Activated CD4-positive, alpha-beta memory T cell treated with anti-CD3 and anti-CD28 coated beads for 36 hours (primary cell): ENCODE measurements at regions of chr10 and their contacts with region 1.

Region 1: GRCh38 chr10:110547139-110547761 is 20.2 kb upstream of the SMC3 start:
- DNase-seq: no peak
- H3K4me3 Mint-ChIP-seq: no peak overlapping the region
- H3K27ac Mint-ChIP-seq: no peak overlapping the region
- H3K4me1 Mint-ChIP-seq: peaks cover 10% of the 10 kb centered on the region
- H3K27me3 Mint-ChIP-seq: peaks cover 12% of the 10 kb centered on the region

Region 2: DNA sequence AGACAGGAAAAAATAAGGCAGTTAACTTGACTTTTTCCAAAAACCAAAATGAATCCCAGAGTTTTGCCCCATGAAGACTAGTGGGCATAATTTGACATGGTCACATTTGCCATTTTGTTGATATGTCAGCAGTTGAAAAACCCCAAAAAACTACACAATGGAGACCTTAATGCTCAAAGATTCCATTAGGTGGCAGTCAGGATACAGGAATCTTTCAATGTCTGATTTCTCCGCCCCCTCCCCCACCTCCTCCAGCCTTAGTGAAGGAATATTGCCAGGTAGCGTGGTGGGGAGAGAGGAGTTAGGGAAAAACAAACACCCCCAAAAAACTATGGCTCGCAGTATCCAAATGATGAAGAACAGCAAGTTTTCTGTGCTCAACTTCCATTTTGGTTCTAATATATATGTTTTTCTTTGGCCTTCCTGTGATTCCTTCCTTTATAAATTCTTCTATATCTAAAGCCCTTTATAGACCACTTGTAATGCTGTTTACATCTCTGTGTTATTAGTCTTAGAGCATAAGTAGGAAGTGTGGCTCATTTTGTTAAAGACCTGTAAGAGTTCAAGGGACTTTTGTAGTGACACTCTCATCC is 235.8 kb before region 1 on chr10:
- CTCF ChIA-PET with region 1: interaction called, 99 read pairs
- POLR2A ChIA-PET with region 1: interaction called, 3 read pairs
- intact Hi-C with region 1: loop called (anchors 1 kb)
- DNase-seq: peak; percentile 52
- H3K4me3 Mint-ChIP-seq: no peak overlapping the region
- H3K27ac Mint-ChIP-seq: peak overlapping the region; percentile 9
- H3K4me1 Mint-ChIP-seq: peaks cover 31% of the 10 kb centered on the region
- H3K27me3 Mint-ChIP-seq: peaks cover 2% of the 10 kb centered on the region

Region 3: DNA sequence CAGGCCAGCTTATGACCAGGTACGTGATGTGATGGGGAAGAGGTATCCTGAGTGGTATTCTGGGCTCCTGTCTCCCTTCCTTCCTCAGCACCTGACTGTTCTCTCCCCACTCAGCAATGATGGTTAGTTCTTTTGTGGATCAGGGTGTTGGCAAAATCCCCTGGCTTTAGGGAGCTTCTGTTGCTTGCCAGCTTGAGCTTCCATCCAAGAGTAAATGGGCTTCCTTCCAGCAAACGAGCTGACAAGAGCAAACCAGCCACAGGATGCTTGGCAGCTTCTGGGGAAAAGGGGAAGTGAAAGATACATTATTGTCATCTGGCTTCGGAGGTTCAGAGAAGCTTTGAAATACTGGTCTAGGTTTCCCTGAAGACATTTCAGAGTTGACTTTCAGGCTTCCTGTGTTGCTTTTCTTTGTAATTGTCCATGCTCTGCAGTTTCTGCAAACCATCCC is 44.4 kb before region 1 on chr10:
- CTCF ChIA-PET with region 1: interaction called, 20 read pairs
- POLR2A ChIA-PET with region 1: interaction called, 6 read pairs
- intact Hi-C with region 1: loop called (anchors 1 kb)
- DNase-seq: peak; percentile 58
- H3K4me3 Mint-ChIP-seq: peak overlapping the region; percentile 96
- H3K27ac Mint-ChIP-seq: peak overlapping the region; percentile 97
- H3K4me1 Mint-ChIP-seq: peaks cover 78% of the 10 kb centered on the region
- H3K27me3 Mint-ChIP-seq: no peaks in the 10 kb centered on the region

Region 4: GRCh38 chr10:110512461-110513187 is 34.6 kb before region 1 on chr10:
- CTCF ChIA-PET with region 1: interaction called, 15 read pairs
- POLR2A ChIA-PET with region 1: interaction called, 3 read pairs
- intact Hi-C with region 1: no loop called
- DNase-seq: peak; percentile 82
- H3K4me3 Mint-ChIP-seq: no peak overlapping the region
- H3K27ac Mint-ChIP-seq: peak overlapping the region; percentile 85
- H3K4me1 Mint-ChIP-seq: peaks cover 60% of the 10 kb centered on the region
- H3K27me3 Mint-ChIP-seq: no peaks in the 10 kb centered on the region

Region 5: GRCh38 chr10:110528224-110528997 is 18.8 kb before region 1 on chr10:
- CTCF ChIA-PET with region 1: interaction called, 4 read pairs
- POLR2A ChIA-PET with region 1: no interaction called
- intact Hi-C with region 1: loop called (anchors 1 kb)
- DNase-seq: peak; percentile 25
- H3K4me3 Mint-ChIP-seq: no peak overlapping the region
- H3K27ac Mint-ChIP-seq: peak overlapping the region; percentile 85
- H3K4me1 Mint-ChIP-seq: peaks cover 66% of the 10 kb centered on the region
- H3K27me3 Mint-ChIP-seq: no peaks in the 10 kb centered on the region